Activated CD8-positive, alpha-beta T cell treated with anti-CD3 and anti-CD28 coated beads, Interleukin-2, amount 10 ng/mL, durations not matched to agents 7 days and 5 days (primary cell): ENCODE measurements at regions of chr6 and their contacts with region 1.

Region 1: DNA sequence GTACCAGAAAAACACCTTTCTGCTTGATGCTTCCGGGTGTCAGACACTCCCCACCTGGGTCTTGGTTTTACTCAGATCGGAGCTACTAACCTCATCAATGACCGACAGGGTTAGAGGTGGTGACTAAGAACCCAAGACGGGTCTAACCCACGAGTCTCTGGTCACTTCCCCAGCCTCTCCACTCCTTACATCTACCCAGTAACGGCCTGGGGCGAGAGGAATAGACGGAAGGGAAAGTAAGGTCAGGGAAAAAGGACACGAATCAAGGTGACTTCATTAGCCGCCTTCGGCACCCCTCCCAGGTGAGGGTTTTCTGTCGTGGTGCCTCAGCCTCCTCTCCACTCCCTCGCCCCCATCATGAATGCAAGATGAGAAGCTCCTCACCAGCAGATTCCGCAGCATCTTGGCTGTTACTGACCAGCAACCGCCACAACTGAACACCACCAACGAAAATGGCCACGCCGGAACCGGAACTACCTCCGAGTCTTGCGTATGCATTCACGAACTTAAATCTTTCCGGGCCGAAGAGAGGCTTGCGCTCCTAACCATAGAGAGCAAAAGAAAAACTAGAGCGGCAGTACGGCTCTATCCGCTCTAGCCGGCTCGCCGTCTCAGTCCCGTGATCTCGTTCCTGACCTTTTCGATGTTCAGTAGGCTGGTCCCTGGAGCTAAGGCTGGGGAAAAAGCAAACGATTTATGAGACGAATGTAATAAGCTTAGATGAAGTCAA is at the start of gene COX7A2:
- DNase-seq: peak; percentile 93
- ATAC-seq: peak; percentile 98
- H3K4me3 Mint-ChIP-seq: peak within 1 kb of the TSS; percentile 95
- H3K27ac Mint-ChIP-seq: peak within 1 kb of the TSS; percentile 97
- H3K4me1 Mint-ChIP-seq: peaks cover 18% of the 10 kb centered on the region
- H3K27me3 Mint-ChIP-seq: peaks cover 21% of the 10 kb centered on the region
- total RNA-seq, gene COX7A2: 430 to 441 TPM

Region 2: DNA sequence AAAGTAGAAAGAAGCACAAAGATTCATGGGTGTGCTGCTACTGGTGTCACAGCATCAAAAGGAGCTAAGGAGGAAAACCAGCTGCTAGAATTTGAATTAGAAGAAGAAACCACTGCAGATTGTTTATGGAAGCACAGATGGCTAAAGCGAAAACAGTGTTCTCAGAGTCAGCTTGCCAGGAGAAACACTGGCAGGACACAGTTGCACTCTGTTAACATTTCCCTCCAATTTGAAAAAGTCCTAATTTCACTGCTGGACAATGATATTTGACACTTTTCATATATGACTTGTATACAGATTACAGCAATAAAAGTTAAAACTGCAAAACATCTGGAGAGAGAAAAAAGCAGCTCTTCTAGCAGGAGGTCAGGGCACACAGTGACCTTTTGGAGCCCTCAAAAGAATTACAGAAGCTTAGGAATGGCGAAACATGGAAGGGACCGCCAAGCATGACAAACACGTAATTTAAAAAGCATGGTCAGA is 352.1 kb before region 1 on chr6:
- CTCF ChIA-PET with region 1: no interaction called
- POLR2A ChIA-PET with region 1: no interaction called
- DNase-seq: no peak
- ATAC-seq: no peak
- H3K4me3 Mint-ChIP-seq: no peak overlapping the region
- H3K27ac Mint-ChIP-seq: no peak overlapping the region
- H3K4me1 Mint-ChIP-seq: no peaks in the 10 kb centered on the region
- H3K27me3 Mint-ChIP-seq: no peaks in the 10 kb centered on the region

Region 3: GRCh38 chr6:75266716-75267291 is 23.3 kb after region 1 on chr6:
- CTCF ChIA-PET with region 1: interaction called, 10 read pairs
- POLR2A ChIA-PET with region 1: interaction called, 11 read pairs
- DNase-seq: no peak
- ATAC-seq: peak; percentile 65
- H3K4me3 Mint-ChIP-seq: no peak overlapping the region
- H3K27ac Mint-ChIP-seq: no peak overlapping the region
- H3K4me1 Mint-ChIP-seq: peaks cover 13% of the 10 kb centered on the region
- H3K27me3 Mint-ChIP-seq: no peaks in the 10 kb centered on the region

Region 4: DNA sequence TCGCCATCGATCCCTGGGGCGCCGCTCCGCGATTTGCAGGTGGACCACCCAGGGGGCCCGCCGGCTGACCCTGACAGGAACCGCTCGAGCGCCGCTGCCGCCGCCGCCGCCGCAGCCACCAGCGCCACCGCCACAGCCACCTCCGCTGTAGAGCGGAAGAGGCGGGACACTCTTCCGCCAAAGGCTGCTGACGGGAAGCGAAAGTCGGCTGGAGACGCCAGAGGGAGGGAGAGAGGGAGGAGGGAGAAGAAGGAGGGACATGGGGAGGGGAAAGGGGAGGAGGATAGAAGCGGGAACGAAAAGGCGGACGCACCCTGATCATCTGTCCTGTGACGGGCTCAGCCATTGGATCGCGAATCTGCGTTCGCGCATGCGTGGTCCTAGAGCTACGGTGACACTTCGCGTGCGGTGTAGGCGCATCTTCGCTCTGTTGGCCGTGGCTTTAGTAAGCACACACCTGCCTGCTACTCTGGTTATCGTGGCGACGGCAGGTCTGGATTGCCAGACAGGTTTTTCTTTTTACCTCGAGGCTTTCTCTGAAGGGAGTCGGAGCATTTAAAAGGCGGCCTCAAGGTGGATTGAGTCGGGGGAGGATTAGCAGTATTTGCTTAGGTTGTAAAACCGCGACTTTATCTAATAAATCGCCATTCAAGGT is 41.3 kb after region 1 on chr6 and contains the start of gene TMEM30A:
- CTCF ChIA-PET with region 1: interaction called, 3 read pairs
- POLR2A ChIA-PET with region 1: interaction called, 50 read pairs
- DNase-seq: peak; percentile 98
- ATAC-seq: peak; percentile 95
- H3K4me3 Mint-ChIP-seq: no peak within 1 kb of the TSS
- H3K27ac Mint-ChIP-seq: no peak within 1 kb of the TSS
- H3K4me1 Mint-ChIP-seq: peaks cover 44% of the 10 kb centered on the region
- H3K27me3 Mint-ChIP-seq: no peaks in the 10 kb centered on the region
- total RNA-seq, gene TMEM30A: 50.2 to 56.4 TPM

Region 5: DNA sequence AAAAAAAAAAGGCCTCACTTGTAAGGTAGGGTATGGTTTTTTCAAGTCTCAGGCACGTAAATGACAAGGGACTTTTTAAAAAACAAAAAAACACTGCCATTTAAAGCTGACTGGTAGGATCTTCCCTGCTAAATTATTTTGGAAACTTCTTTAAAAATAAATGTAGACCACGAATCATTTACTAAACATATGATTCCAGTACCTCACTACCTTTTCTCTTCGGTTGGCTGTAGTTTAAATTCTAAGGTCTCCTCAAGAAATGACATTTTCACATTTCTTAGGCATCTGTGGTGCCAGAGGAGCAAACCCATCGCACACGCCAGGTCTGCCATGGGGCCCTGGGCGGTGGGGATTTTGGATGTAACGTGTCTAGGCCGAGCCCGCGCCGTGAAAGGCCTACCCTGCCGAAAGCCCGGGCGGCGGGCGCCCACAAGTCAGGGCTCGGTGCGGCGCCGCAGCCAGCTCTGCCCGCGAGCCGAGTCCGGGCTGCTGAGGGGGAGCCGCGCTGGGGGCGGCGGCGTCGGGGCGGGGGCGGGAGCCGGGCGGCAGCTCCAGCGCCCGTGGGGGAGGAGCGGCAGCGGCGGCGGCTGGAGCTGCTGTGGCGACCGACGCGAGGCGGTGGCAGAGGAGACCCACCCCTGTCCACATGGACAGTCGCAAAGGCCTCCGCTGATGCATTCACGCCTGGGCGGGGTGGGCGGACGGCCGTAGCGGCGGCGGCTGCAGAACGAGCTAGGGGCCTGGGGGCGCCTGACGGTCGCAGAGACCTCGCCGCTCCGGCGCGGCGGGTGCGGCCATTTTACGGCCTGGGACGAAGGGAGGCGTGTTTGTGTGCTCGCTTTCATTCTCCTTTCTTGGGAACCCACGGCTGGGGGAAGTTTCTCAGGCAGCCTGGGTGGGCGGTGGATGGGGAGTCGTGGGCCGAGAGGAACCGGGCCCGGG is 358.1 kb after region 1 on chr6 and contains the start of gene SENP6:
- CTCF ChIA-PET with region 1: no interaction called
- POLR2A ChIA-PET with region 1: interaction called, 15 read pairs
- DNase-seq: peak; percentile 74
- ATAC-seq: peak; percentile 79
- H3K4me3 Mint-ChIP-seq: peak within 1 kb of the TSS; percentile 98
- H3K27ac Mint-ChIP-seq: peak within 1 kb of the TSS; percentile 98
- H3K4me1 Mint-ChIP-seq: peaks cover 49% of the 10 kb centered on the region
- H3K27me3 Mint-ChIP-seq: no peaks in the 10 kb centered on the region
- total RNA-seq, gene SENP6: 66.2 to 68.9 TPM